ENCODE measurements at regions of chr9 and their contacts with region 1.

Region 1: GRCh38 chr9:91199739-91200497 is 161.8 kb downstream of the AUH start:
- DNase-seq: no peak
- ATAC-seq: no peak
- H3K4me3 Mint-ChIP-seq: no peak overlapping the region
- H3K27ac Mint-ChIP-seq: no peak overlapping the region
- H3K4me1 Mint-ChIP-seq: peaks cover 9% of the 10 kb centered on the region
- H3K27me3 Mint-ChIP-seq: no peaks in the 10 kb centered on the region
- CTCF ChIP-seq: no peak

Region 2: DNA sequence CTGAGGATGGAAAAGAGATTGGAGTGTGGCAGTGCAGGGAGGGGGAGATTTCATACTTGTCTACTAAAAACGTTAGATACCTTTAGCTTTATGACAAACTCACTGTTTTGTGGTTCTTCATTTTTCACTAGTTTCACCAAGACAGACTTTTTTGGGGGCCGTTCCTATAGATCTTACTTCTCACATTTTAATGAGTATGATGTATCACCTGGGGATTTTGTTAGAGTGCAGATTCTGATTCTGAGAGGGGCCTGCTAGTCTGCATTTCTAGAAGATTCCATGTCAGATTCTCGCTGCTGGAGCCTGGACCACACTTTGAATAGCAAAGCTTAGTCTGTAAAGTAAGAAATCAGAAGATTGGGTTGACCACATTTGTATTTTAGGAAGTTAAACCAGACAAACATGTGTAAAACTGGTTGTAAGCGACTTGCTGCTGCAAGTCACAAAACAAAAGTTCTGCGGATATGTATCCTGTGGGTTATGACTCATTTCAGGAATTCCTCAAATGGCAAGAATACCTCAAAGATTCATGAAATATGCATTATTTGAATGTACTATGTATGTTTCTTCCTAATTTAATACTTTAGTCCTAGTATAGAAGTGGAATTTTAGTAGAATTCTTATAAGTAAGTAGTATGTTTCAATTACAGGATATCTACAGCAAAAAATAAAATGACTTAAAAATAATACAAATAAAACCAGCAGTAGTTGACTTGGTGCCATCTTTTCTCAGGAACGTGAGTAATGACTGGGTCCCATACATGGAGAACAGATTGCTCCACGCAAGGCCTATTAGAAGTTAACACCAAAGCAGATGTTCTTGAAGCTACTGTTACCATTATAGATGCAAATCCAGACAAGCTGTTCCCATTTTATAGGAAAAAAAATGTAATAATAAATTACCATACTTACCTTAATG is 195.9 kb after region 1 on chr9:
- CTCF ChIA-PET with region 1: no interaction called
- POLR2A ChIA-PET with region 1: no interaction called
- intact Hi-C with region 1: no loop called
- DNase-seq: no peak
- ATAC-seq: no peak
- H3K4me3 Mint-ChIP-seq: no peak overlapping the region
- H3K27ac Mint-ChIP-seq: no peak overlapping the region
- H3K4me1 Mint-ChIP-seq: peaks cover 7% of the 10 kb centered on the region
- H3K27me3 Mint-ChIP-seq: no peaks in the 10 kb centered on the region
- CTCF ChIP-seq: no peak

Region 3: DNA sequence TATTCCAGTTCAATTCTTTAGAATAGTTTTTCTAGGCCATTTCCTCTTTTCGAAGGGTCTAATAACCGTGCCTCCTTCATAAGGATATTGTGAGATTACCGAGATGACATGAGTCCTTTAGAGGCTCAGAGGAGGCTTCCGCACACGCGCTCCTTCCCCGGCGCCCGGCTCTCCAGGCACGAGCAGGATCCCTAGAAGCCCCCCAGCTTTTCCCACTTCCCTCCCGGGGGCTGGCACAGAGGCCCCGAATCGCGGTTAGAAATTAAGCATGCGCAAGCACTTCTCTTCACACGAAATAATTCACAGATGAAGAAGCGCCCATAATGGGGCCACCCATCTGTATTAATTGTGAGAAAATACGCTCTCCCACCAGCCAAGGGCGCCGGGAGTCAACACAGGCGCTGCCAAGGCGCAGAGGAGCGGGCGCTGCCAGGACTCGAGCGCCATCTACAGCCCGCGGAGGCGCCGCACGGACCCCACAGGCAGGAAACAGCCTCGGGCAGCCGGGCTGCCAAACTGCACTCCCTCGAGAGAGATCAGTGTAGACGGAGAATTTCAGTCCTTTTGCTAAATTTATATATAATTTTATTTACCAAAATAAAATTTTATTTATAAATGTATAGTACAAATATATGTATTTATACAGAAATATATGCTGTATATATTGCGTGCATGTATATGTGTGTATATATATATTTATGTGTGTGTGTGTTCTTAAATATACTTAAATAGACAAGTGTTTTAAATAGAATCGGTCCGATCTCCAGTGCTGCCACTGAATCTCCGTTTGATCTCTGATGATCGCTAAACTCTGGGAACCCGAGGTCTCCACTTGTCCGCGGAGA is 481.8 kb after region 1 on chr9:
- CTCF ChIA-PET with region 1: no interaction called
- POLR2A ChIA-PET with region 1: interaction called, 12 read pairs
- intact Hi-C with region 1: no loop called
- DNase-seq: peak; percentile 51
- ATAC-seq: peak; percentile 87
- H3K4me3 Mint-ChIP-seq: peak overlapping the region; percentile 70
- H3K27ac Mint-ChIP-seq: no peak overlapping the region
- H3K4me1 Mint-ChIP-seq: peaks cover 5% of the 10 kb centered on the region
- H3K27me3 Mint-ChIP-seq: peaks cover 27% of the 10 kb centered on the region
- CTCF ChIP-seq: no peak

Measured in activated B cell treated with CpG ODN at 0.5 μM for 24 hours (primary cell).